ENCODE measurements at regions of chr10 and their contacts with region 1.

Region 1: DNA sequence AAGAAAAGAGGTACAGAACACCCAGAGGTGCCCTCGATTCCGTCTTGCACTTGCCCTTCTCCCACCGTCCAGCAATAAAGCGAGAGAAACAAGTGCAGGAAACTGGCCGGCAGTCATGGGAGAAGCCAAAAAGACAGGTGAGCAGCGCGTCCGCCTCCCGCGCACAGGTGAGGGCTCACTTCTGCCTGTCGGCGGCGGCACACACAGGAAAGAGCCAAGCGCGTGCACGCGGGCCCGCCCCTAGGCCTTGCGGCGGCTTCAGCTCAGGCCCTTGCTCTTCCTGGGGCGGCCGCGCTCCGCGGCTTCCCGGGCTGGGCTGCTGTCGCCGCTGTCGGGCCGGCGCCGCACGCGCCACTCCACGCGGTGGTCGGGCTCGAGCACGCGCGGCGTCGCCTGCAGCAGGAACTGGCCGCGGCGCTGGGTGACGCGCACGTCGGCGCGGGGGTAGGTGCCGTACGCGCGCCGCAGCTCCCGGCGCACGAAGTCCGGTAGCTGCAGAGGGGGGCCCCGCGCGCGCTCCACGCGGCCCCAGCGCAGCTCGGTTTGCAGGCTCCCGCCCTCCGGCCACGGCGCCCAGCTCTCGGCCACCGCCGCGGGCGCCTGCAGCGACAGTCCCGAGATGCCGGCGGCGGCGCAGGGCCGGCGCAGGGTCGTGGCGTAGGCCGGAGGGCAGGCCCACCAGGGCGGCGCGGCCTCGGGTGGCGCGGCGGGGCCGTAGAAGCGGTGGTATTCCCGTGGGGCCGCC is 977 bp downstream of the C10orf95 start:
- DNase-seq: peak; percentile 85 to 95 (median 92)
- ATAC-seq: peak; percentile 90
- H3K4me3 ChIP-seq: peak overlapping the region; percentile 88
- H3K4me3 Mint-ChIP-seq: peak overlapping the region; percentile 89 to 97 (median 94)
- H3K27ac ChIP-seq: peak overlapping the region; percentile 90
- H3K27ac Mint-ChIP-seq: peak overlapping the region; percentile 81 to 97 (median 95)
- H3K4me1 ChIP-seq: peaks cover 12 to 14% of the 10 kb centered on the region in 2 donors
- H3K4me1 Mint-ChIP-seq: peaks cover 14 to 37% (median 27%) of the 10 kb centered on the region in 7 donors
- H3K27me3 ChIP-seq: no peaks in the 10 kb centered on the region
- H3K27me3 Mint-ChIP-seq: no peaks in the 10 kb centered on the region

Region 2: GRCh38 chr10:102055647-102056419 is 394.5 kb before region 1 on chr10 and contains the start of gene ARMH3:
- CTCF ChIA-PET with region 1: no interaction called
- POLR2A ChIA-PET with region 1: no interaction called
- intact Hi-C with region 1: loop called in 1 of 2 experiments (anchors 5 kb)
- DNase-seq: peak; percentile 72 to 90 (median 87)
- ATAC-seq: peak; percentile 98
- H3K4me3 ChIP-seq: peak within 1 kb of the TSS; percentile 92
- H3K4me3 Mint-ChIP-seq: peak within 1 kb of the TSS; percentile 89 to 98 (median 94)
- H3K27ac ChIP-seq: peak within 1 kb of the TSS; percentile 87
- H3K27ac Mint-ChIP-seq: peak within 1 kb of the TSS; percentile 76 to 97 (median 92)
- H3K4me1 ChIP-seq: peaks cover 18 to 20% of the 10 kb centered on the region in 2 donors
- H3K4me1 Mint-ChIP-seq: peaks cover 25 to 50% (median 42%) of the 10 kb centered on the region in 7 donors
- H3K27me3 ChIP-seq: no peaks in the 10 kb centered on the region
- H3K27me3 Mint-ChIP-seq: no peaks in the 10 kb centered on the region
- total RNA-seq, gene ARMH3: 26.7 to 34.0 (median 28.8) TPM

Region 3: GRCh38 chr10:102408728-102409603 is 41.4 kb before region 1 on chr10:
- CTCF ChIA-PET with region 1: interaction called, 4 read pairs
- POLR2A ChIA-PET with region 1: interaction called, 15 read pairs
- intact Hi-C with region 1: loop called in 1 of 2 experiments (anchors 1 kb)
- DNase-seq: peak; percentile 53 to 88 (median 76)
- ATAC-seq: peak; percentile 79
- H3K4me3 ChIP-seq: peak overlapping the region; percentile 66
- H3K4me3 Mint-ChIP-seq: peak overlapping the region; percentile 73 to 91 (median 87)
- H3K27ac ChIP-seq: peak overlapping the region; percentile 72
- H3K27ac Mint-ChIP-seq: peak overlapping the region; percentile 42 to 92 (median 87)
- H3K4me1 ChIP-seq: peaks cover 5 to 36% of the 10 kb centered on the region in 2 donors
- H3K4me1 Mint-ChIP-seq: peaks cover 22 to 50% (median 42%) of the 10 kb centered on the region in 7 donors
- H3K27me3 ChIP-seq: peaks cover 0 to 12% of the 10 kb centered on the region in 2 donors
- H3K27me3 Mint-ChIP-seq: peaks cover 0 to 32% (median 18%) of the 10 kb centered on the region in 5 donors

Region 4: DNA sequence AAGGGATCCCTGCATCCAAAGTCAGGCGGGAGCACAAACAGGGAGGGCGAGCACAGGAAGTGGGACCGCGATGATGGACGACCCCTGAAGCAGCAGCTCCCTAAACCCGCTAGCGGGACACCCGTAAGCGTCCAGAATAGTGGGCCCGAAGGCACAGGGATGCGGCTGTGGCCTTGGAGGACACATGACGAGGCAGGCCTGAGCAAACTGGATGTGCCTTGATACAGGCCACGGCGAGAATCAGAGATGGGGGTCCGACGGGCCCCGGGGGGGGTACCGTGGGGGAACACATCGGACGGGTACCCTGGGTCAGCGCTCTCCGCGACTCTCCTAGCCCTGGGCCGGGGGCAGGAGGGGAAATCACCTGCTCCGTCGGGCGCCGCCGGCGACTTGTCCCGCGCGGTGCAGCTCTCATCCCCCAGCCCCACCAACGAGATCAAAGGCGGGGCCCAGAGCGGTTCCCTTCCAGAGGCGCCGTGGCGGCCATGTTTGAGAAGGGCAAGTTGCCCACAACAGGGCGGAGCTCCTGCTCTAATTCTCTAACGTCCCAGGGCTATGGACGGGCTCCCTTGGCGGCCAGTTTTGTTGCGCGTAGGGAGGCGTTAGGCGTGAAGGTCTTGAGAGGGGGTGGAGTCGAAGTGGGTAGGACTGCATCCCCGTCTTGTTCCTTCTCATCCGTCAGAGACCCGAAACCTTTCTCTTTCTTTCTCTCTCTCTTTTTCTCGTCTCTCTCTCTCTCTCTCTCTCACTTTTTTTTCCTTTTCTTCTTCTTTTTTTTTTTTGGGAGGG is 18.0 kb before region 1 on chr10 and contains the start of gene CUEDC2:
- CTCF ChIA-PET with region 1: interaction called, 9 read pairs
- POLR2A ChIA-PET with region 1: interaction called, 157 read pairs
- intact Hi-C with region 1: loop called (anchors 1 kb)
- DNase-seq: peak; percentile 86 to 97 (median 91)
- ATAC-seq: peak; percentile 98
- H3K4me3 ChIP-seq: peak within 1 kb of the TSS; percentile 96
- H3K4me3 Mint-ChIP-seq: peak within 1 kb of the TSS; percentile 81 to 96 (median 93)
- H3K27ac ChIP-seq: peak within 1 kb of the TSS; percentile 80
- H3K27ac Mint-ChIP-seq: peak within 1 kb of the TSS; percentile 90 to 97 (median 94)
- H3K4me1 ChIP-seq: peaks cover 28 to 49% of the 10 kb centered on the region in 2 donors
- H3K4me1 Mint-ChIP-seq: peaks cover 38 to 60% (median 48%) of the 10 kb centered on the region in 7 donors
- H3K27me3 ChIP-seq: no peaks in the 10 kb centered on the region
- H3K27me3 Mint-ChIP-seq: no peaks in the 10 kb centered on the region
- total RNA-seq, gene CUEDC2: 27.0 to 69.0 (median 31.9) TPM

Region 5: DNA sequence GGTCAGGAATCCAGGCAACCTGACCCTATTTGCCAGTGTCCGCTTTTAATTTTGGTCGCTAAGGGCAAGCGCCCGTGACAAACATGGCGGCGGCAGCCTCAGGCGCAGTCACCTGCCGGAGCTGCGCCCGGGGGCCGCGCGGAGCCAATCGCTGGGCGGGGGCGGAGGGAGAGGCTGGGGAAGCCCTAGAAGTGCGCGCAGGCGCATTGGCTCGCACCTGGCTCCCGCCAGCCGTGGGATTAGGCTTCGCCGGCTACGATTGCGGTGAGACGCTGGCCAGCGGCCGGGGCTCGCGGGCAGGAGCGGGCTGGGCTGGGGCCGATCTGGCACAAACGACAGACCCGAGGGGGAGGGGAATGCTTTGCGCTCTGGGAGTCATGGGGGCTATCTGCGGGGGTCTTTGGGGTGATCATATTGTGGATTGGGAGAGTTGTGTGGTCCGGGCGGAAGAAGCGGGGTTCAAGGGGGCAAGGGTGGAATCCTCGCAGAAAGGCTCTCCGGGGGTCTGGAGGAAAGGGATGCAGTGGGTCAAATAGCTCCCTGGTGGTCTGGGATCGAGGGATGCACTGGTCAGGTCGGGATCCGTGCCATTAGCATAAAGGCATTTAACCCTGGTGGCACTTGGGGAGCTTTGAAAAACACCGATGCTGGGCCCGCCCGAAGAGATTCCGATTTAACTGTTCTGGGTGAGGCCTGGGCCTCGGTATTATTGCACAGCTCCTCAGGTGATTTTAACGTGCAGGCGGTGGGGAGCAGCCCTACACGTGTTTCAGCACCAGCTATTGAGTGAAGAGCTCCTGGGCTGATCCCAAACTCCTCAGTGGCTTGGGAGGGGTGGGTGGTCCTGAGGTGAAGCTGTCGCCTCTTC is 11.1 kb after region 1 on chr10:
- CTCF ChIA-PET with region 1: no interaction called
- POLR2A ChIA-PET with region 1: interaction called, 73 read pairs
- intact Hi-C with region 1: loop called (anchors 1 kb)
- DNase-seq: peak; percentile 84 to 95 (median 90)
- ATAC-seq: peak; percentile 99
- H3K4me3 ChIP-seq: peak overlapping the region; percentile 93
- H3K4me3 Mint-ChIP-seq: peak overlapping the region; percentile 83 to 96 (median 92)
- H3K27ac ChIP-seq: peak overlapping the region; percentile 74
- H3K27ac Mint-ChIP-seq: peak overlapping the region; percentile 72 to 90 (median 85)
- H3K4me1 ChIP-seq: peaks cover 9 to 14% of the 10 kb centered on the region in 2 donors
- H3K4me1 Mint-ChIP-seq: peaks cover 19 to 40% (median 34%) of the 10 kb centered on the region in 7 donors
- H3K27me3 ChIP-seq: no peaks in the 10 kb centered on the region
- H3K27me3 Mint-ChIP-seq: peaks cover 0 to 2% (median 0%) of the 10 kb centered on the region in 5 donors

Region 6: GRCh38 chr10:102743588-102744373 is 293.4 kb after region 1 on chr10 and contains the start of gene WBP1L:
- CTCF ChIA-PET with region 1: no interaction called
- POLR2A ChIA-PET with region 1: interaction called, 3 read pairs
- intact Hi-C with region 1: loop called in 1 of 2 experiments (anchors 1 kb)
- DNase-seq: peak; percentile 77 to 98 (median 96)
- ATAC-seq: peak; percentile 98
- H3K4me3 ChIP-seq: peak within 1 kb of the TSS; percentile 85
- H3K4me3 Mint-ChIP-seq: peak within 1 kb of the TSS; percentile 80 to 97 (median 93)
- H3K27ac ChIP-seq: peak within 1 kb of the TSS; percentile 77
- H3K27ac Mint-ChIP-seq: peak within 1 kb of the TSS; percentile 57 to 96 (median 90)
- H3K4me1 ChIP-seq: peaks cover 17 to 25% of the 10 kb centered on the region in 2 donors
- H3K4me1 Mint-ChIP-seq: peaks cover 33 to 59% (median 48%) of the 10 kb centered on the region in 7 donors
- H3K27me3 ChIP-seq: no peaks in the 10 kb centered on the region
- H3K27me3 Mint-ChIP-seq: no peaks in the 10 kb centered on the region
- total RNA-seq, gene WBP1L: 20.5 to 37.9 (median 34.1) TPM